GM10248 (cell line): ENCODE measurements at regions of chr5 and their contacts with region 1.

Region 1: DNA sequence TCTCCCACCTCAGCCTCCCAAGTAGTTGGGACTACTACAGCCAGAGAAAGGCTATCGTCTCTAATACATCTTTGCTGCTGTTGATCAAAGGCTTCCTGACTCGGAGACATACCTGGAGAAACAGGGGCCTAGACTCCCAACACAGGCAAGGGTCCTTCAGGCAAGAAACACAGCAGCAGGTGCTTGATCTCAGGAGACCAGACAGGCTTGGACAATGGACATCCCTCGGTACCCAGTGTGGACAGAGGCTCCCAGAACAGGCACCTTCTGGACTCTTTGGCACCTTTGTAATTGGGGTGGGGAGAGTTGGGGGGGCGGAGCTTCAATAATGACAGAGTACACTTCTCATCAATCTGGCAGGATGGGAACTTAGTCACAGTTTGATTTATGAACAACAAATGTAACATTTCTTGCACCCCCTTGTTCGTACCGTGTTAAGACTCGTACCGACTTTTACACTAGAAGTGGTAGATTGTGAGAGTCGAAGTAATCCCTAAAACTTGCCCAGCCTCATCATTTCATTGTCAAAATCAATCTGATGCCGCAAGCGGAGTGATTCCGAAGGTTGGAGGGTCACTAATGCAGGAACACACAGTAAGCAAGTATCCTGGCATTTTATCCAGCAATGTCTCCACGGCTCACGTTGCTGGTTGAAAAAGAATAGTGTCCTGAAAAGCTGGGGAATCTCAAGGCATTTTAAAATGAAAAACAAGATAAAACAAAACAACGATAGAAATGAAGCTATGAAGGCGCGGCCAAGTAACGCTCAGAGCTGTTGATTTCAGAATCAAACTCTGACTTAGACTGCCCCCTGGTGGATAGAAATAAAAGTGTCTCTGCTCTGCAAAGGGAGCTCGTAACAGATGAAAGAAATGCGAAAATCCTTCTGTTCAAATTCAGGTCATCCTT is 46.4 kb upstream of the STK32A start:
- DNase-seq: peak; percentile 52
- CTCF ChIP-seq: peak; percentile 67

Region 2: GRCh38 chr5:146533260-146533857 is 655.1 kb before region 1 on chr5:
- CTCF ChIA-PET with region 1: interaction called, 76 read pairs
- POLR2A ChIA-PET with region 1: no interaction called
- DNase-seq: peak; percentile 73
- CTCF ChIP-seq: peak; percentile 83

Region 3: GRCh38 chr5:146541958-146542849 is 646.2 kb before region 1 on chr5:
- CTCF ChIA-PET with region 1: interaction called, 60 read pairs
- POLR2A ChIA-PET with region 1: no interaction called
- DNase-seq: peak; percentile 69
- CTCF ChIP-seq: peak; percentile 95

Region 4: DNA sequence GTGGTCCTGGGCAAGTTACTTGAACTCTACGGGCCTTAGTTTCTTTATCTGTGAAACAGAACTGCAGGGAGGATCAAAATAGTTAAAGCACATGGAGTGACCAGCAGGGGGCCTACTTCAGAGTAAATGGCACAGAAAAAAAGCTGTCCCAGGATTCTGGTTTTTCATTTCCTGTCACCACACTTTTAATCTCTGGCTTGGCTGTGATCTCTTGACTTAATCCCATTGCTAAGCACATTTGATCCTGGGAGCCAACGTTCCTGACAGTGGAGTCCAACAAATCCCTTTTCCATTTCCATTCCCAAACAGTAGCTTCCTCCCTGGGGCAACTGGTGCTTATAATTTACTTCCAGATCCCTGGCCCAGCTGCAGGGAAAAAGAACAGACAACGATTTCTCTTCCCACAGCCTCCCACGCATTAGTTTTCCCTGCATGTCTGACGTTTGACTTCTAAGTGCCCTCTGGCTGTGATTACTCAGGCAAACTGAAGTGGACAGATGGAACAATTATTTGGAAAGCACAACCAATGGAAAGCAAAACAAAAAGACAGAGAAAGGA is 90.1 kb before region 1 on chr5:
- CTCF ChIA-PET with region 1: interaction called, 29 read pairs
- POLR2A ChIA-PET with region 1: no interaction called
- DNase-seq: peak; percentile 24
- CTCF ChIP-seq: peak; percentile 19

Region 5: DNA sequence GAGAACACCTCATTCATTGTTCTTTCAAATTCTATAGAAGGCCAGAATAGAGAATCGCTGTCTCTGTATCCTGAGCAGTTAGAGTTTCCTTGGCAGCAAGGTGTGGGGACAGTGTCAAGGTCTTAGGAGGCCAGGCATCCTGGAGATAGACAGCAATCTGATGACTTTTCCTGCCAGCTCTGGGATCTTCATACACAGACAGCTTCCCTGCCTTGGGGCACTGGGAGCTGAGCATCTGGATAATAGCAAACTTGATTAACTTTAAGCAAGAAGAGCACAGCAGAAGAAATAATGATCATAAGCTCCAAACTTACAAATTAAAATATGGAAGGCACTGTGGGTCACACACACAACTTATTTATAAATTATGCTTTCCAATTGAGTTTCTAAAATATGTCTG is 39.7 kb before region 1 on chr5:
- CTCF ChIA-PET with region 1: interaction called, 11 read pairs
- POLR2A ChIA-PET with region 1: no interaction called
- DNase-seq: no peak
- CTCF ChIP-seq: no peak

Region 6: GRCh38 chr5:147169399-147169798 is 19.1 kb before region 1 on chr5:
- CTCF ChIA-PET with region 1: interaction called, 12 read pairs
- POLR2A ChIA-PET with region 1: no interaction called
- DNase-seq: no peak
- CTCF ChIP-seq: no peak

Region 7: GRCh38 chr5:147203213-147203612 is 14.8 kb after region 1 on chr5:
- CTCF ChIA-PET with region 1: interaction called, 10 read pairs
- POLR2A ChIA-PET with region 1: no interaction called
- DNase-seq: no peak
- CTCF ChIP-seq: no peak